ENCODE measurements at regions of chr1 and their contacts with region 1.

Region 1: GRCh38 chr1:101238681-101239094 is 1.9 kb downstream of the S1PR1 start:
- DNase-seq: peak; percentile 85 to 92 (median 89)
- H3K4me3 ChIP-seq: no peak overlapping the region
- H3K27ac ChIP-seq: peak overlapping the region in 3 of 5 donors; percentile 27 to 41 (median 30)
- H3K4me1 ChIP-seq: peaks cover 5 to 25% of the 10 kb centered on the region in 2 donors
- H3K27me3 ChIP-seq: no peaks in the 10 kb centered on the region
- CTCF ChIP-seq: peak; percentile 86 to 93 (median 90)
- POLR2A ChIP-seq: peak in 1 of 2 donors; percentile 44

Region 2: DNA sequence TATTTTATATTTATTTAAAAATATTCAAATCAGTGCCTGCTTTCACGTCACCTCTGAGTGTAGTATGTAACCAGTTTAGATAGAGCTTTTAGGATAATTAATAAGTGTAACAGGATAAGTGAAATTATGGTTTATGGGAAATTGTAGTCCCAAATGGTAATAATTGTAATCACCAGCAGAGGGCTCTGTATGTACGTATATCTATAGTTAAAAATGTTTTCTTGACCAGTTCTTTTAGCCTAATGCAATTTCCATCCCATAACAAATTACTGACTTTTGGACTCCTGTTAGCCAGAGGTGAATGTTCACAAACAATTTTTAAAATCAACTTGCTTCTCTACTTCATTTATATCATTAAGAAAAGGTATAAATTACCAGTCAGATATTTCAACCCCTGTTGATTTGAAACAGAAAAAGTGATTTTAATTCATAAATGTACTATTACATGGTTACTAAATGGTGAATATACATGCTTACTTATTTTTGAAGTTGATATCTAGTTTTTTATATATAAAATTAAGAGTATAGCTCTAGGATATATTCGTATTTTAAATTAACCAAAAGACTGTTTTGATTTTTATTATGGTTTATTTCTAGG is 317.5 kb before region 1 on chr1:
- intact Hi-C with region 1: loop called in 1 of 2 experiments (anchors 5 kb)
- DNase-seq: no peak
- H3K4me3 ChIP-seq: no peak overlapping the region
- H3K27ac ChIP-seq: no peak overlapping the region
- H3K4me1 ChIP-seq: peaks cover 0 to 10% of the 10 kb centered on the region in 2 donors
- H3K27me3 ChIP-seq: no peaks in the 10 kb centered on the region
- CTCF ChIP-seq: peak; percentile 58 to 83 (median 68)
- POLR2A ChIP-seq: no peak

Region 3: GRCh38 chr1:101136739-101137138 is 101.9 kb before region 1 on chr1:
- intact Hi-C with region 1: loop called in 1 of 2 experiments (anchors 10 kb)
- DNase-seq: no peak
- H3K4me3 ChIP-seq: no peak overlapping the region
- H3K27ac ChIP-seq: no peak overlapping the region
- H3K4me1 ChIP-seq: peaks cover 0 to 17% of the 10 kb centered on the region in 2 donors
- H3K27me3 ChIP-seq: no peaks in the 10 kb centered on the region
- CTCF ChIP-seq: peak in 2 of 6 experiments; percentile 27 to 30
- POLR2A ChIP-seq: no peak

Region 4: DNA sequence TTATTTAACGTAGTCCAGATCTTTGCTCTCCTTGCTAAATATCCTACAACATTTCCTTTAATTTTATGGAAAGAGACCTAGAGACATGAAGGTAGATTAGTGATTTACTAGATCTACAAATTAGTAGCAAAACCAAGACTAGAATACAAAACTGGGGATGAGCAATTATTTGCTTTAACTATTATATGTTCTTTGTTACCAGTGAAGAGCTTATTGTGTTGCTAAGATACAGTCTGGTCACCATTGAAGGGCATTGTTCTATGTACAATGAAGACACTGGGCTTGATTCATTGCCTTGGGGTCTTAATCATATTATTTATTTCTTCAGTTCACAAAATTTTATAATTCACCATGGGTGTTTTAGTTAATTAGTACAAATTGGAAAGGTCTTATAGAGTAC is 86.5 kb after region 1 on chr1:
- intact Hi-C with region 1: no loop called
- DNase-seq: no peak
- H3K4me3 ChIP-seq: no peak overlapping the region
- H3K27ac ChIP-seq: no peak overlapping the region
- H3K4me1 ChIP-seq: no peaks in the 10 kb centered on the region
- H3K27me3 ChIP-seq: peaks cover 10% of the 10 kb centered on the region
- CTCF ChIP-seq: no peak
- POLR2A ChIP-seq: no peak

Region 5: GRCh38 chr1:101407505-101408211 is 169.0 kb after region 1 on chr1:
- intact Hi-C with region 1: no loop called
- DNase-seq: no peak
- H3K4me3 ChIP-seq: no peak overlapping the region
- H3K27ac ChIP-seq: no peak overlapping the region
- H3K4me1 ChIP-seq: no peaks in the 10 kb centered on the region
- H3K27me3 ChIP-seq: no peaks in the 10 kb centered on the region
- CTCF ChIP-seq: no peak
- POLR2A ChIP-seq: no peak